ENCODE measurements at regions of chr5 and their contacts with region 1.

Region 1: DNA sequence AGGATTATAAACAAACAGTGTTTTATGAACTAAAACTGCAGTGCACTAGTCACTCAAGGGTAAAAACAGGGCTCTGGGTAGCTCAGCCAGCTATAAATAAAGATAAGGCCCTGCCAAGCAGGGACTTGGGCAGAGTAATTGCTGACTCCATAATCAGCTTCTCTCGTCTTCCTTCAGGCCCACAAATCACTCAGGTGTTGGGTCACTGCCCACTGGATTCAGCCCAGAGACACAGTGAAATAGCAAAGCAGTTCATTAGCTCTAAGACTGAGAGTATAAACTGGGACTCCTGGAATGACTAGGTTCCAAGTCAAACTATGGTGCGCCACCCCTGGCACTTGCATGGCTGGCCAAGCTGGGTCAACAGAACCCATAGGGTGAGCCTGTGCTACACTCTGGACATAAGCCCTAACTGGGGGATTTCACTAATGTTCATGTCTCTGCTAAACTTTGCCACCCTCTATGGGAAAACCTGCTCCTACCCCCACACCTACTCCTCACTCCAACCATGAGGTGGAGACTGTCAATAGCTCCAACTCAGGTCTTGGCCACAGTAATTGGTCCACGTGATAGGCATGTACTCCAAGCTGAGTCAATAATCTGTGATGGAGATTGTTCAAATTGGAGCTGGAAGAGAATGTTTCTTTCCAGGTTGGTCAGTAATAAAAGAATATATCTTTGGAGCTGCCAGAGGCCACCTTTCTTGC is 158.5 kb downstream of the SLIT3 start:
- DNase-seq: no peak
- ATAC-seq: no peak
- H3K4me3 ChIP-seq: no peak overlapping the region
- H3K27ac ChIP-seq: peak overlapping the region in 1 of 2 experiments; percentile 38; a peak in 1 of 6 replicates
- H3K4me1 ChIP-seq: peaks cover 26% of the 10 kb centered on the region
- CTCF ChIP-seq: no peak
- EP300 ChIP-seq: no peak
- POLR2A ChIP-seq: no peak
- RAD21 ChIP-seq: no peak

Region 2: GRCh38 chr5:169115461-169116124 is 26.8 kb before region 1 on chr5:
- CTCF ChIA-PET with region 1: no interaction called
- POLR2A ChIA-PET with region 1: no interaction called
- DNase-seq: no peak
- ATAC-seq: no peak
- H3K4me3 ChIP-seq: no peak overlapping the region
- H3K27ac ChIP-seq: no peak overlapping the region
- H3K4me1 ChIP-seq: no peaks in the 10 kb centered on the region
- CTCF ChIP-seq: no peak
- EP300 ChIP-seq: no peak
- POLR2A ChIP-seq: no peak
- RAD21 ChIP-seq: no peak

Region 3: GRCh38 chr5:169161022-169161680 is 18.7 kb after region 1 on chr5:
- CTCF ChIA-PET with region 1: interaction called, 7 read pairs
- POLR2A ChIA-PET with region 1: interaction called, 10 read pairs
- DNase-seq: peak; percentile 75 to 90
- ATAC-seq: peak; percentile 82 to 87
- H3K4me3 ChIP-seq: no peak overlapping the region
- H3K27ac ChIP-seq: peak overlapping the region; percentile 63 to 88
- H3K4me1 ChIP-seq: peaks cover 74% of the 10 kb centered on the region
- CTCF ChIP-seq: no peak
- EP300 ChIP-seq: no peak; a peak in 2 of 5 replicates
- POLR2A ChIP-seq: no peak
- RAD21 ChIP-seq: peak in 1 of 2 experiments; percentile 7; a peak in 2 of 5 replicates

Region 4: GRCh38 chr5:169173372-169173771 is 31.0 kb after region 1 on chr5:
- CTCF ChIA-PET with region 1: no interaction called
- POLR2A ChIA-PET with region 1: no interaction called
- DNase-seq: no peak
- ATAC-seq: no peak; a peak in 1 of 6 replicates
- H3K4me3 ChIP-seq: no peak overlapping the region
- H3K27ac ChIP-seq: no peak overlapping the region
- H3K4me1 ChIP-seq: 0 out of 3 replicates have a peak, but pooled peaks cover 6% of the 10 kb centered on the region
- CTCF ChIP-seq: no peak
- EP300 ChIP-seq: no peak
- POLR2A ChIP-seq: no peak
- RAD21 ChIP-seq: no peak

Region 5: DNA sequence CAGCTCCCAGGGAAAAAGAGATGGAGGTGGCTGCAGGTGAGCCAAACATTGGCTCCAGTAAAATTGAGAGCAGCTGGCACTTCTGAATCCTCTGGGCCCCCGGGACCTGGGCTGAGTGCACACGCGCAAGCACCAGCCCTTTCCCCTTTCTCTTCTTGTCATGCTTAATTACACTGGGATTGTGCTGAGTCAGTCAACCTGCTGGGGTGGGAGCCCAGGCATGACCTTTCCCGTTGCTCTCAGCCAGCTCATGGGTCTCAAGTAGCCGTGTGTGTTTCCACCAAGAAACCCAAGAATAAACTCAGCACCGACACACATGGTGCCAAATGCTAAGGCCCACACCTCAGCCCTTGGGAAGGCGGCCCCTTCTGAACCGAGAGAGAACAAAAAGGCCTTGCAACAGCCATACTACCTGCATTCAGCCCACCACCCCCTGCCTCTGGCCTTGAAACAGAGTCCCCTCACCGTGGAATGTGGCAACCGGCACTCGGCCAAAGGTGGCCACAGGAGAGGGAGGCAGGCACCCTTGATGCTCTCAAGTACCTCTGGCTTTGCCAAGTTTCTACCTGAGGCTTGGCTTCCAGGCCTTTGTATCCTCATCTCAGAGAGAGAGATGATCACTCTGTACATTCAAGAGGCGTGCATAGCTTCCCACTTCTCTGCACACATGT is 130.4 kb after region 1 on chr5:
- CTCF ChIA-PET with region 1: no interaction called
- POLR2A ChIA-PET with region 1: interaction called, 13 read pairs
- DNase-seq: no peak
- ATAC-seq: no peak
- H3K4me3 ChIP-seq: no peak overlapping the region
- H3K27ac ChIP-seq: 0 out of 6 replicates have a peak overlapping the region, but pooled peaks of 1 of the 2 experiments have one; percentile 14
- H3K4me1 ChIP-seq: no peaks in the 10 kb centered on the region
- CTCF ChIP-seq: no peak
- EP300 ChIP-seq: no peak
- POLR2A ChIP-seq: no peak
- RAD21 ChIP-seq: no peak

Measured in A549 (cell line).